ENCODE measurements at regions of chr12 and their contacts with region 1.

Region 1: GRCh38 chr12:110888256-110888991 is 32.0 kb downstream of the MYL2 start:
- DNase-seq: no peak
- H3K4me3 ChIP-seq: peak overlapping the region in 1 of 2 donors; percentile 86
- H3K4me3 Mint-ChIP-seq: peak overlapping the region in 6 of 8 donors; percentile 94 to 96 (median 94)
- H3K27ac ChIP-seq: no peak overlapping the region
- H3K27ac Mint-ChIP-seq: peak overlapping the region in 4 of 7 donors; percentile 29 to 92 (median 81)
- H3K4me1 ChIP-seq: peaks cover 3% of the 10 kb centered on the region
- H3K4me1 Mint-ChIP-seq: peaks cover 3 to 8% (median 4%) of the 10 kb centered on the region in 4 donors
- H3K27me3 ChIP-seq: peaks cover 4% of the 10 kb centered on the region
- H3K27me3 Mint-ChIP-seq: peaks cover 2 to 4% of the 10 kb centered on the region in 2 donors

Region 2: DNA sequence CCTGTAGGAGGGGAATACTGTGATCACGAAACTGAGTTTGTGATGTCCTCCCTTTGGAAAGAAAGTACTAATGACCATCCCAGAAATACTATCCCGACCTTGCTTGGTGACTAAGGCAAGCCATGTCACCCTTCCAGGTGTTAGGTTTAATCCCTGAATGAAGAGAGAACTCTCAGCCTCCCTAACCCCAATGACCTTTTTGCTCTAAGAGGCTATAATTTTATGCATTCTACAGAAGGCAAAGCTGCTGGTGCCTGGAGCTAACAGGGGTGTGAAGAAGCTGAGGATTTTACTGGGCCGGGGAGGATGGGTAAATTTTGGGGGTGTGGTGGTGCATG is 832.3 kb before region 1 on chr12:
- CTCF ChIA-PET with region 1: no interaction called
- POLR2A ChIA-PET with region 1: no interaction called
- intact Hi-C with region 1: no loop called
- DNase-seq: no peak
- H3K4me3 ChIP-seq: no peak overlapping the region
- H3K4me3 Mint-ChIP-seq: no peak overlapping the region
- H3K27ac ChIP-seq: no peak overlapping the region
- H3K27ac Mint-ChIP-seq: no peak overlapping the region
- H3K4me1 ChIP-seq: no peaks in the 10 kb centered on the region
- H3K4me1 Mint-ChIP-seq: peaks cover 0 to 4% (median under 1%) of the 10 kb centered on the region in 4 donors
- H3K27me3 ChIP-seq: no peaks in the 10 kb centered on the region
- H3K27me3 Mint-ChIP-seq: no peaks in the 10 kb centered on the region

Region 3: GRCh38 chr12:110100315-110100970 is 788.0 kb before region 1 on chr12:
- CTCF ChIA-PET with region 1: interaction called, 3 read pairs
- POLR2A ChIA-PET with region 1: no interaction called
- intact Hi-C with region 1: loop called (anchors 1 kb)
- DNase-seq: peak; percentile 52 to 60 (median 56)
- H3K4me3 ChIP-seq: no peak overlapping the region
- H3K4me3 Mint-ChIP-seq: peak overlapping the region in 2 of 8 donors; percentile 11 to 64
- H3K27ac ChIP-seq: no peak overlapping the region
- H3K27ac Mint-ChIP-seq: peak overlapping the region in 6 of 7 donors; percentile 0 to 43 (median 16)
- H3K4me1 ChIP-seq: peaks cover 6% of the 10 kb centered on the region
- H3K4me1 Mint-ChIP-seq: peaks cover 5 to 8% (median 6%) of the 10 kb centered on the region in 4 donors
- H3K27me3 ChIP-seq: no peaks in the 10 kb centered on the region
- H3K27me3 Mint-ChIP-seq: no peaks in the 10 kb centered on the region

Region 4: GRCh38 chr12:110355073-110355472 is 533.4 kb before region 1 on chr12:
- CTCF ChIA-PET with region 1: no interaction called
- POLR2A ChIA-PET with region 1: no interaction called
- intact Hi-C with region 1: loop called (anchors 10 kb)
- DNase-seq: peak in 3 of 5 donors; percentile 15 to 22 (median 15)
- H3K4me3 ChIP-seq: no peak overlapping the region
- H3K4me3 Mint-ChIP-seq: peak overlapping the region in 3 of 8 donors; percentile 5 to 39 (median 18)
- H3K27ac ChIP-seq: no peak overlapping the region
- H3K27ac Mint-ChIP-seq: peak overlapping the region in 2 of 7 donors; percentile 19 to 30
- H3K4me1 ChIP-seq: peaks cover 3% of the 10 kb centered on the region
- H3K4me1 Mint-ChIP-seq: peaks cover 14 to 24% (median 20%) of the 10 kb centered on the region in 4 donors
- H3K27me3 ChIP-seq: no peaks in the 10 kb centered on the region
- H3K27me3 Mint-ChIP-seq: no peaks in the 10 kb centered on the region

Region 5: DNA sequence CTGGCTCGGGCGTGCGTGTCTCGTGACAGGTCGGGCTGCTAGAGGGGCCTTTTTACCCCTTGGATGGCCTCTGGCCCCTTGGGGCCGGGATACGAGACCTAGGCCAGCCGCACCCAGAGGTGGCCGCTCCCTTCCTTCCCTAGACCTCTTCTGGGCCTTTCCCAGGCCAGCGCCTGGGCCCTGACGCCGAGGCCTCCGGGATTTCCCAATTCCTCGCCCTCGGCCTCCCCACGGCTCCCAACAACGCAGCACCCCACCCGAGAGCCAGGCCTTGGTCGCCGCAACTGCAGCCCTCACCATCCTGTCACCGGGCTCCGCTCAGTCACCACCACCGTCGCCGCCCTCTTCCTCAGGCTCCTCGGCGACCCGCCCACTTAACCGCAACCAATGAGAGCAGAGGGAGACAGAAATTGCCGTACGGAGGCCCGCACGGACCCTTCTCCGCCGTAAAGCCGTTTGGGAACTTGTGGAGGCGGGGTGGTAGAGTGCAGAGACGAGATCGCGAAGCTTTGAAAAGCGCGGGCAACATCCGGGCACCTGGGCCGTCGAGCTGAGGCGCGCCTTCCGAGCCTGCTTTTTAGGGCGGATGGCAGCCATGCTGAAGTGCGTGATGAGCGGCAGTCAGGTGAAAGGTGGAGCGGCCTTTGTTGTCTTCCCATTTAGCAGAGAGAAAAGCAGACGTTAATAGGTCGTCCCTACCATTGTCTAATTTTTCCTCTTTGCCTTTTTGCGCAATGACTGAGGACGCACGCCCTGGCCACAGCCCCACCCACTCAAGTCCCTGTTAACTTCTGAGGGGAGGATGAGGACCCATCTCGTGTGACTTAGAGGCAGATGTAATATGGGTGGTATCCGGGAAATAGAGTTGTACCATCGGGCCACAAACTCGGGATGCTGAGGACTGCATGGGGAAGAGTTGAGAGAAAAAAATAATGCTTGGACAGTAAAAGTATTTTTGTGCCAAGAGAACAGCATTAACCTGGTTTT is 386.4 kb before region 1 on chr12 and contains the starts of genes RAD9B and VPS29:
- CTCF ChIA-PET with region 1: no interaction called
- POLR2A ChIA-PET with region 1: no interaction called
- intact Hi-C with region 1: loop called (anchors 5 kb)
- DNase-seq: peak; percentile 99 to 100 (median 99)
- H3K4me3 ChIP-seq: peak within 1 kb of the TSS; percentile 85 to 91
- H3K4me3 Mint-ChIP-seq: peak within 1 kb of the TSS; percentile 96 to 99 (median 98)
- H3K27ac ChIP-seq: peak within 1 kb of the TSS; percentile 94
- H3K27ac Mint-ChIP-seq: peak within 1 kb of the TSS; percentile 95 to 99 (median 97)
- H3K4me1 ChIP-seq: peaks cover 35% of the 10 kb centered on the region
- H3K4me1 Mint-ChIP-seq: peaks cover 20 to 44% (median 30%) of the 10 kb centered on the region in 4 donors
- H3K27me3 ChIP-seq: no peaks in the 10 kb centered on the region
- H3K27me3 Mint-ChIP-seq: no peaks in the 10 kb centered on the region
- total RNA-seq, gene RAD9B: 1.1 to 2.1 TPM
- total RNA-seq, gene VPS29: 117 to 121 TPM

Region 6: GRCh38 chr12:110619534-110619953 is 268.9 kb before region 1 on chr12:
- CTCF ChIA-PET with region 1: no interaction called
- POLR2A ChIA-PET with region 1: no interaction called
- intact Hi-C with region 1: loop called (anchors 1 kb)
- DNase-seq: no peak
- H3K4me3 ChIP-seq: no peak overlapping the region
- H3K4me3 Mint-ChIP-seq: no peak overlapping the region
- H3K27ac ChIP-seq: no peak overlapping the region
- H3K27ac Mint-ChIP-seq: no peak overlapping the region
- H3K4me1 ChIP-seq: peaks cover 3% of the 10 kb centered on the region
- H3K4me1 Mint-ChIP-seq: peaks cover 0 to 2% (median under 1%) of the 10 kb centered on the region in 4 donors
- H3K27me3 ChIP-seq: no peaks in the 10 kb centered on the region
- H3K27me3 Mint-ChIP-seq: no peaks in the 10 kb centered on the region

Region 7: DNA sequence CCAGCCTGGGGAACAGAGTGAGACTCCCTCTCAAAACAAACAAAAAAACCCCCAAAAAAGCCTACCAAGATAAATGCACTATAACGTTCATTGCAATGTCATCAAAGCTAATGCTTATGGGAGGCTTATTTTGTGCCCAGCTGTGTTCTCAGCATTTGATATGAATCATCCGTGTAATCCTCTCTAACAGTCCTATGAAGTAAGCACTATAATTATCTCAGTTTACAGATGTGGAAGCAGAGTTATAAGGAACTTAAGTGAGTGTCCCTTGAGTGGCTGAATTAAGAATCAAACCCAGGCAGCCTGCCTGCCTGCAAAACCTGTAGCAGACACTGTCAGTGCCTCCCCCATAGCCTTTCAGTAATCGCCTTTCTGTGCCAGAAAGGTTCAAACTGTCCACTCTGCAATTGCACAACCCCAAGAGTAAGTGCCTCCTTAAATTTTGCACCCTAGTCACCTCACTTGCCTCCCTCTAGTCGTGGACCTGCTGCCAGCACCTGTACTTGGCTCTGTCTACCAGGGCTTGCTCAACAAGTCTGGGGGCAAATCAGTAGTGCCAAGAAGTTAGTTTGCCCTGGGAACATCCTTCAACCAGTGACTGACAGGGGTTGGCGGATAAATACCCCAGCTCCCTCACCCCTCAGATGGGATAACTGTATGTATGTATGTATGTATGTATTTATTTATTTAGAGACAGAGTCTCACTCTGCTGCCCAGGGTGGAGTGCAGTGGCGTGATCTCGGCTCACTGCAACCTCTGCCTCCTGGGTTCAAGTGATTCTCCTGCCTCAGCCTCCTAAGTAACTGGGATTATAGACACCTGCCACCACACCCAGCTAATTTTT is 121.9 kb before region 1 on chr12:
- CTCF ChIA-PET with region 1: no interaction called
- POLR2A ChIA-PET with region 1: no interaction called
- intact Hi-C with region 1: no loop called
- DNase-seq: no peak
- H3K4me3 ChIP-seq: no peak overlapping the region
- H3K4me3 Mint-ChIP-seq: no peak overlapping the region
- H3K27ac ChIP-seq: no peak overlapping the region
- H3K27ac Mint-ChIP-seq: no peak overlapping the region
- H3K4me1 ChIP-seq: no peaks in the 10 kb centered on the region
- H3K4me1 Mint-ChIP-seq: peaks cover 1 to 4% (median 2%) of the 10 kb centered on the region in 4 donors
- H3K27me3 ChIP-seq: no peaks in the 10 kb centered on the region
- H3K27me3 Mint-ChIP-seq: no peaks in the 10 kb centered on the region

Region 8: GRCh38 chr12:110826592-110827200 is 61.7 kb before region 1 on chr12:
- CTCF ChIA-PET with region 1: interaction called, 3 read pairs
- POLR2A ChIA-PET with region 1: no interaction called
- intact Hi-C with region 1: loop called (anchors 1 kb)
- DNase-seq: peak; percentile 73 to 83 (median 77)
- H3K4me3 ChIP-seq: peak overlapping the region in 1 of 2 donors; percentile 5
- H3K4me3 Mint-ChIP-seq: peak overlapping the region; percentile 36 to 76 (median 66)
- H3K27ac ChIP-seq: no peak overlapping the region
- H3K27ac Mint-ChIP-seq: peak overlapping the region in 3 of 7 donors; percentile 9 to 89 (median 60)
- H3K4me1 ChIP-seq: peaks cover 6% of the 10 kb centered on the region
- H3K4me1 Mint-ChIP-seq: peaks cover 3 to 7% (median 7%) of the 10 kb centered on the region in 4 donors
- H3K27me3 ChIP-seq: no peaks in the 10 kb centered on the region
- H3K27me3 Mint-ChIP-seq: peaks cover 1 to 4% of the 10 kb centered on the region in 2 donors